Activated B cell treated with CpG ODN at 0.5 μM for 24 hours (primary cell): ENCODE measurements at regions of chr4 and their contacts with region 1.

Region 1: DNA sequence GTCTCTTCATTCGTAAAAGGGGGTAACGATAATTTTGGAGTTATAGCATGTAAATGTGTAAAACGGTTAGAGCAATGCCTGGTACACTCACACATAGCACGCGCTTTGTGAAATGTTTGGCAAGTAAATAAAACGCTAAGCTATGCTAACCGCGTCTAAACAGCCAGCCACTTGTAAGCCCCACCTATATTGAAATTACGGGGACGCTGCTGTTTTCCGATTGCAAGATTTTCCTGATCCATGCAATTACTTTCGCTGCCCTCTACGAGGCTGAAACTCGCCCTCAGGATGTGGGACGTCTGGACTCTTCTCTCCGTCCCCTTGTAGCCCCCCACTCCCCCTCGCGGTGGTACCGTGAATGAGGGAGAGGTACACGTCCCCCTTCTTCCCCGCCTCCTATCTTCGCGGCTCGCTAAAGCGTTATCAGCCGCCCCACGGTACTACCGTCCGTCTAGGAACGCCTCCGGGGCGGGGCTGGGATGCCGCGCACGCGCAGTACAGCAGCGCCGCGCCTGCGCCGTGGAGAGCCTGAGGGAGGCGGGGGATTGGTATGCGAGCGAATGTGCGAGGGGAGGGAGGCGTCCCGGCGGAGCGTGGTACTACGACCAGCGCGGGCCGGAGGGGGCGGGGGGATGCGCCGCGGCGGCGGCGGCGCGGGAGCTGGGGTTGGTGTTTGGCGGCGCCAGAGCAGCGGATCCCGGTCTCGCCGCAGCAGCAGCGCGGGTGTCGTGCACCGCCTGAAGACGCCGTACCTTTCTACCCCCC is at the start of gene STIM2:
- DNase-seq: peak; percentile 100
- ATAC-seq: peak; percentile 67
- H3K4me3 Mint-ChIP-seq: peak within 1 kb of the TSS; percentile 100
- H3K27ac Mint-ChIP-seq: peak within 1 kb of the TSS; percentile 100
- H3K4me1 Mint-ChIP-seq: peaks cover 63% of the 10 kb centered on the region
- H3K27me3 Mint-ChIP-seq: no peaks in the 10 kb centered on the region
- CTCF ChIP-seq: no peak
- total RNA-seq, gene STIM2: 48.7 and 59.8 TPM in 2 replicates

Region 2: DNA sequence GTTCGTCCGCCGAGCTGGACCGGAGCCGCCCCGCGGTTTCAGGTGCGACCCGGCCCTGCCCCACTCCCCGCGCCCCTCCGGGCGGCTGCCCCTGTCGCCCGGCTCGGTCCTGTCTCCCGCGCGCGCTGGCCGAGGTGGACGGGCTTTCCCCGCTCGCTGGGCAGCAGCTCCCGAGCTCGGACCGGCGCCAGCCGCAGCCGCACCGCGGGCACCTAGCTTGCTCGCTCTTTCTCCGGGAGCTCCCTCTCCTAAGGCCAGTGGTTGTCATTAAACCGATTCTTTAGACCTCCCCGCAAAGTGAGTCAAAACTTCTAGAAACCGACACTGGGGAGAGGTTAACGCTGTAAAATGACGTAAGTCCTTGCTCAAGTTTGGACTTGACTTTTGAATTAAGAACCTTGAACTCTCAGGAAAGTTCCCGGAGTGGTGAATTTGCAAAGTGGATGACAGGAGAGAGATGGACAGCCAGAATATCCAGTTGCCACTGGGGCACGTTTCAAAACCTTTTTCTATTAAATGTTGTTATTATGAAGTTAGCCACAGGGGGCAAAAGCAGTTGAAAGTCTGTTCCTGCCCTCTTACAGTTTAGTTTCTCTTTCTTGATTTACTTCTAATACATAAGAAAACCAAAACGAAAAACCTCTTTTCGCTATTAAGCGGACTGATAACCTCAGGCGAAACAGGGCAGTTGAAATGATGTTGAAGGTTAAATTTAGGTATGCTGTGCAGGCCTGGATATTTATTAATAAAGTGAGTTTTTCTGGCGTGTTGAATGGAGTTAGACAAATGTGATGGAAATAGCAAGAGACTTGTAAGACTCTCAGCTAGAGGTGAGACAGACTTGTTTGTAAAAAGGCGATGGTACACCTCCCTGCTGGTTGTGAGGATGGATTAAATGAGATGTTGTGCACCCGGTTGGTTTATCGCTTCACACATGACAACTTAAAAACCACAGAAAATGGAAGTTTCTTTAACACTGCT is 1625.7 kb before region 1 on chr4:
- CTCF ChIA-PET with region 1: no interaction called
- POLR2A ChIA-PET with region 1: no interaction called
- intact Hi-C with region 1: loop called (anchors 10 kb)
- DNase-seq: no peak
- ATAC-seq: peak; percentile 53
- H3K4me3 Mint-ChIP-seq: peak overlapping the region; percentile 90
- H3K27ac Mint-ChIP-seq: peak overlapping the region; percentile 95
- H3K4me1 Mint-ChIP-seq: peaks cover 47% of the 10 kb centered on the region
- H3K27me3 Mint-ChIP-seq: no peaks in the 10 kb centered on the region
- CTCF ChIP-seq: no peak

Region 3: GRCh38 chr4:25913851-25914669 is 946.3 kb before region 1 on chr4 and contains the start of gene SMIM20:
- CTCF ChIA-PET with region 1: no interaction called
- POLR2A ChIA-PET with region 1: interaction called, 4 read pairs
- intact Hi-C with region 1: loop called (anchors 2 kb)
- DNase-seq: peak; percentile 85
- ATAC-seq: peak; percentile 92
- H3K4me3 Mint-ChIP-seq: peak within 1 kb of the TSS; percentile 99
- H3K27ac Mint-ChIP-seq: peak within 1 kb of the TSS; percentile 97
- H3K4me1 Mint-ChIP-seq: peaks cover 36% of the 10 kb centered on the region
- H3K27me3 Mint-ChIP-seq: no peaks in the 10 kb centered on the region
- CTCF ChIP-seq: no peak
- total RNA-seq, gene SMIM20: 16.6 and 18.7 TPM in 2 replicates

Region 4: GRCh38 chr4:26459054-26459755 is 401.1 kb before region 1 on chr4:
- CTCF ChIA-PET with region 1: interaction called, 3 read pairs
- POLR2A ChIA-PET with region 1: interaction called, 7 read pairs
- intact Hi-C with region 1: loop called (anchors 1 kb)
- DNase-seq: no peak
- ATAC-seq: peak; percentile 64
- H3K4me3 Mint-ChIP-seq: peak overlapping the region; percentile 55
- H3K27ac Mint-ChIP-seq: no peak overlapping the region
- H3K4me1 Mint-ChIP-seq: peaks cover 6% of the 10 kb centered on the region
- H3K27me3 Mint-ChIP-seq: peaks cover 4% of the 10 kb centered on the region
- CTCF ChIP-seq: no peak

Region 5: DNA sequence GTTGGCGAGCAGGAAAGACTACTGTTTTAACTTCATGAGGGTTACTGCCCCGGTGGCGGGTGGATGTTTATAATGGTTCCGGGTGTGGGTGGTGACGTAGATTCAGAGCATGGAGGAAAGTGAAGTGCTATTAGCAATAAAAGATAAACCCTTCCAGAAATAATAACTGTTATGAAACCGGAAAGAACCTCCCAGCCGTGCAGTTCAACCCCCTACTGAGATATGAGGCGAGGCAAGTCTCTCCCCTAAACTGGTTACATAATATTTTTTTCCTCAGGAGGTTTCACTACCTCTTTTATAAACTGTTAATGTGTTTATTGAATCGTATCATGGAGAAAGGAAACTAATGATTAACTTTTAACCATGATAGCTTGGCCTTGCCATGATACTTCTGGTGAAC is 33.6 kb before region 1 on chr4:
- CTCF ChIA-PET with region 1: interaction called, 4 read pairs
- POLR2A ChIA-PET with region 1: interaction called, 34 read pairs
- intact Hi-C with region 1: loop called (anchors 1 kb)
- DNase-seq: peak; percentile 47
- ATAC-seq: peak; percentile 84
- H3K4me3 Mint-ChIP-seq: peak overlapping the region; percentile 59
- H3K27ac Mint-ChIP-seq: peak overlapping the region; percentile 88
- H3K4me1 Mint-ChIP-seq: peaks cover 92% of the 10 kb centered on the region
- H3K27me3 Mint-ChIP-seq: peaks cover 9% of the 10 kb centered on the region
- CTCF ChIP-seq: no peak

Region 6: GRCh38 chr4:26896636-26897035 is 36.3 kb after region 1 on chr4:
- CTCF ChIA-PET with region 1: no interaction called
- POLR2A ChIA-PET with region 1: interaction called, 8 read pairs
- intact Hi-C with region 1: loop called (anchors 5 kb)
- DNase-seq: no peak
- ATAC-seq: no peak
- H3K4me3 Mint-ChIP-seq: no peak overlapping the region
- H3K27ac Mint-ChIP-seq: no peak overlapping the region
- H3K4me1 Mint-ChIP-seq: peaks cover 77% of the 10 kb centered on the region
- H3K27me3 Mint-ChIP-seq: no peaks in the 10 kb centered on the region
- CTCF ChIP-seq: no peak

Region 7: DNA sequence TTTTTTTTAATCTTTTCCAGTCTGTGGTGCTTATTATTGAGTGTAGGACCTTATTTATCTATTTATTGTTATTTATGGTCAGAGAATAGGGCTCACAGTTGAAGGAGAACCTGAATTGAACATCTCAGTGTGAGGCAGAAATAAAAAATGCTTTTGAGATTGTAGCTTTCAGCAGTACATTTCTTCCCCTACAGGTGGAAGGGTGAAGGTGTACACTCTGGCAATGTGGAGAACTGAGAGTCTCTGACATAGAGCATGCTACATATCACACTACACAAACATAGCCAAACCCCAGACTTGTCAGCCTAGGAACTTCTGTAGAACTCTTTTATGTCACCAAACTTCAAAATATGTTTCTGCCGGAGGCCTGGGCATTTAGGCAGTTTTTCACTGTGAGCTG is 140.5 kb after region 1 on chr4:
- CTCF ChIA-PET with region 1: interaction called, 13 read pairs
- POLR2A ChIA-PET with region 1: interaction called, 11 read pairs
- intact Hi-C with region 1: no loop called
- DNase-seq: no peak
- ATAC-seq: peak; percentile 89
- H3K4me3 Mint-ChIP-seq: no peak overlapping the region
- H3K27ac Mint-ChIP-seq: peak overlapping the region; percentile 21
- H3K4me1 Mint-ChIP-seq: peaks cover 26% of the 10 kb centered on the region
- H3K27me3 Mint-ChIP-seq: no peaks in the 10 kb centered on the region
- CTCF ChIP-seq: no peak